Activated T-helper 1 cell treated with anti-CD3 and anti-CD28 coated beads, Interleukin-12 subunit alpha, Interleukin-12 subunit beta, Interleukin-2, Interleukin-4 antibody, amounts not matched to agents 30 ng/mL and 10 ng/mL and 1 ng/mL, durations not matched to agents 14 hours and 24 hours and 36 hours (primary cell): ENCODE measurements at regions of chr3 and their contacts with region 1.

Region 1: DNA sequence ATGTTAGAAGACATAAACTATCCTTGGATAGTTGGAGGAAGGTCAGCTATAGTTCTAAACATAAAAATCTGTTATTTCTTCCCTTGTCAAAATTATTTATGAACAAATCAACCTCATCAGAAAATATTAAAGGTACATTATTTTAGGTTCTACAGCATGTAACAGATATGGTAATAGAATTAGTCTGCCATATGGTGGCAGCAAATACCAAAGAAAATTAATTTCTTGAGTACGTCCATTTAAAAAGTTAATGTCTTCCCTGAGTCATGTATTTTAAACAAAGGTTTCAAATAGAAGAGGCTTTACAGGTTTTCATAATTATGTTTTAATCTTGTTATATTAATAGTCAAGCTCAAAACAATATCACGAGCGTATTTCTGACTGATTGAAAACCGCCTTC is 17.9 kb upstream of the ANKRD28 start:
- DNase-seq: no peak
- H3K4me3 Mint-ChIP-seq: no peak overlapping the region
- H3K27ac Mint-ChIP-seq: no peak overlapping the region
- H3K4me1 Mint-ChIP-seq: peaks cover 57% of the 10 kb centered on the region
- H3K27me3 Mint-ChIP-seq: no peaks in the 10 kb centered on the region

Region 2: DNA sequence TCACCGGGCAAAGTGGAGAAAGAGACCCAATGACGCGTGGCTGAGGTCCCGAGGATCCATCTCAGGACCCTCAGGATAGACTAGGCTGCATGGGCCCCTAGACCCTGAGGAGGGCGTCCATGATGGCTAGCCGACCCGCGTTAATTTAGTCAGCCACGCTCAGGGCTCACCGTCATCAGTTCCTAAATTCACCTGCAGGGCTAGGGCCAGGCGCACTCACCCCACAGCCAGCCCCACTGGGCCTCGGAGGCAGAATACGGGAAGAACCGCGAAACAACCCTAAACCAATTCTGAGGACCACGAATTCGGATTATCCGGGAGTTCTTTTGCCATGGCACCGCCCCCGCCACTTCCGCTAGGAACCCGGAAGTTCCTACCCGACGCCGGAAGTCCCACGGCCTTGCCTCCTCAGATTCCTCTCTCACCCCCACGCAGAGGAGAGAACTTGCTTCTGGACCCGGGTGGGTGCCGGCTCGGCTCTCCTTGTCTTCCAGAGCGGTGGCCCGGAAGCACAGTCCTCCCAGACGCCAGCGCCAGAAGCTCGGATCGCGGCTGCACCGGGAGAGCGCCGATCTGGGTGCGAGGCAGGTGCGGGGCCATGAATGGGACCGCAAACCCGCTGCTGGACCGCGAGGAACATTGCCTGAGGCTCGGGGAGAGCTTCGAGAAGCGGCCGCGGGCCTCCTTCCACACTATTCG is 388.4 kb before region 1 on chr3 and contains the starts of genes EAF1 and METTL6:
- intact Hi-C with region 1: loop called (anchors 5 kb)
- DNase-seq: peak; percentile 81
- H3K4me3 Mint-ChIP-seq: peak within 1 kb of the TSS; percentile 97
- H3K27ac Mint-ChIP-seq: peak within 1 kb of the TSS; percentile 96
- H3K4me1 Mint-ChIP-seq: peaks cover 61% of the 10 kb centered on the region
- H3K27me3 Mint-ChIP-seq: no peaks in the 10 kb centered on the region
- total RNA-seq, gene EAF1: 27.3 and 27.8 TPM in 2 replicates
- total RNA-seq, gene METTL6: 15.0 and 15.8 TPM in 2 replicates

Region 3: DNA sequence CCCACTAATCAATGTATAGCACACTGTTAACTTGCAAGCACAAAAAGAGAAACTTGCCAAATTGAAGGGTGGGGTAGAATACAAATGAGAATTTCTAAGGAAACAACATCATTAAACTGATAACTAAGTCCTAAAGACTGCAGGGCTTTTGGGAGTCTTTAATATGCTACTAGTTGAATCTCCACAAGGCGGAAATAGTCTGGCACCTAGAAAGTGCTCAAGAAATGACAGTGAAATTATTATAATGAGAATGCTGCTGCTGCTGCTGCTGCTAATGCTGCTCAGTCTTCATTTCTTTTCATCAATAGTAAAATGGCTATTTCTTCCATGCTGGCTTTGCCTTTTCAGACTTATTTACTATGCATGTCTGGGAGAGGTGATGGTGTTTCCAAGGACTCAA is 122.3 kb before region 1 on chr3:
- intact Hi-C with region 1: loop called (anchors 5 kb)
- DNase-seq: no peak
- H3K4me3 Mint-ChIP-seq: no peak overlapping the region
- H3K27ac Mint-ChIP-seq: no peak overlapping the region
- H3K4me1 Mint-ChIP-seq: peaks cover 8% of the 10 kb centered on the region
- H3K27me3 Mint-ChIP-seq: no peaks in the 10 kb centered on the region

Region 4: GRCh38 chr3:15753056-15753710 is 62.5 kb before region 1 on chr3:
- intact Hi-C with region 1: no loop called
- DNase-seq: no peak
- H3K4me3 Mint-ChIP-seq: no peak overlapping the region
- H3K27ac Mint-ChIP-seq: no peak overlapping the region
- H3K4me1 Mint-ChIP-seq: peaks cover 16% of the 10 kb centered on the region
- H3K27me3 Mint-ChIP-seq: no peaks in the 10 kb centered on the region

Region 5: GRCh38 chr3:15859507-15860013 is 43.9 kb after region 1 on chr3:
- intact Hi-C with region 1: loop called (anchors 2 kb)
- DNase-seq: peak; percentile 78
- H3K4me3 Mint-ChIP-seq: peak overlapping the region; percentile 92
- H3K27ac Mint-ChIP-seq: peak overlapping the region; percentile 91
- H3K4me1 Mint-ChIP-seq: peaks cover 33% of the 10 kb centered on the region
- H3K27me3 Mint-ChIP-seq: peaks cover 3% of the 10 kb centered on the region

Region 6: DNA sequence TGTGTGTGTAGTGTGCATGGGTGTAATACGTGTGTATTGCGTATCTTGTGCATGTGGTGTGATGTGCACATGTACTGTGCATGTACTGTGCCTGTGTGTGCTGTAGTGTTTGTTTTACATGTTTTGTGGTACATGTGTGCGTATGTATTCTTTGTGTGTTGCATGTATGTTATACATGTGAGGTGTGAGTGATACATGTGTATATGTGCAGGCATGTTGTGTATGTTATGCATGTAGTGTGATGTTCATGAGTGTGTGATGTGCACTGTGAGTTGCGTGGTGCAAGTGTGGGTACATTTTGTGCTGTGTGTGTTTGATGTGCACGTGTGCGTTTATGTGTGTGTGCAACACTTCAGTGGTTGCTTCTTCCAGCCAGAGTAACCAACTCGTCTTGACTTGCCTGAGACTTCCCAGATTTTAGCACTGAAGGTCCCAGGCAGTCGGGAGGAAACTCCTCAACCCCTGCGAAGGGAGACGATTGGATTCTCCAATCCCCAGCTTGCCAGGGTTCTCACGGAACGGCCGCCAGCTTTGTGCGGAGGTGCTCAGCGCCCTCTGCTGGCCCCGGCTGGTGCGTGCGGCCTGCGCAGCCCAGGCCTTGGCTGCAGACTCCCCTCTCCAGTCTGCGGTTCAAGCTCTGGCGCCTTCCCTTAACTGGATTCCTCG is 362.4 kb after region 1 on chr3:
- intact Hi-C with region 1: loop called (anchors 1 kb)
- DNase-seq: peak; percentile 45
- H3K4me3 Mint-ChIP-seq: no peak overlapping the region
- H3K27ac Mint-ChIP-seq: no peak overlapping the region
- H3K4me1 Mint-ChIP-seq: no peaks in the 10 kb centered on the region
- H3K27me3 Mint-ChIP-seq: peaks cover 2% of the 10 kb centered on the region